Panc1 (cell line): ENCODE measurements at regions of chr4 and their contacts with region 1.

Region 1: GRCh38 chr4:175536852-175537453 is 275.1 kb downstream of the GPM6A start:
- DNase-seq: peak; percentile 62
- ATAC-seq: no peak
- H3K4me3 ChIP-seq: no peak overlapping the region
- H3K27ac ChIP-seq: no peak overlapping the region
- H3K4me1 ChIP-seq: no peaks in the 10 kb centered on the region
- H3K27me3 ChIP-seq: no peaks in the 10 kb centered on the region
- CTCF ChIP-seq: peak; percentile 23; the same call in 1 of the 2 replicates

Region 2: DNA sequence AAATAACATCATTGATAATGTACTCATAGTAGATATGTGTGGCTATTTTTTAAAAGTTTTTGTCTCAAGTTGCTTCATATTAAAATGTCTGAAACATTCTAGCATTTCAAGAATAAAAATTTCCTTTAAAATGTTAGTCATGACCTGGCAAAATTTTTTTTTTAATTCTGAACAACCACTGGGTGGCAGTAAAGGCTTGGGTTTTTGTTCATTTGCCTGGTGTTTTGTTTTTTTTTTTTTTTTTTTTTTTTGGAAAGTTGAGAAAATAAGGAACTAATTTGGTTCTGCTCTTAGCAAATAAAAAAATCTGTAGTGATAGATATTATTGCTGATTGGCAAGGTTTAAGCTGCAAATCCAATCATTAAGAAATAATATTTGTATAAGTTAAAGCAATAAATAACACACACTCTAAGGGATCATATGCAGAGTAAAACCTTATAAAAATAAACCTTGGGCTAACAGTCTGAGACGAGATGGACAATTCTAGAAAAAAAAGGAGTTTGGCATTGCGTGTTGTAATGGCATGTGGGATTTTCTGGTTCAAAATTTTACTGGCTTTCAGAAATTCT is 1171.8 kb before region 1 on chr4:
- CTCF ChIA-PET with region 1: no interaction called
- POLR2A ChIA-PET with region 1: no interaction called
- in situ Hi-C with region 1: no loop called
- intact Hi-C with region 1: loop called (anchors 5 kb)
- DNase-seq: no peak
- ATAC-seq: no peak
- H3K4me3 ChIP-seq: no peak overlapping the region
- H3K27ac ChIP-seq: no peak overlapping the region
- H3K4me1 ChIP-seq: no peaks in the 10 kb centered on the region
- H3K27me3 ChIP-seq: no peaks in the 10 kb centered on the region
- CTCF ChIP-seq: peak; percentile 34; the same call in 1 of the 2 replicates

Region 3: GRCh38 chr4:174764105-174764729 is 772.7 kb before region 1 on chr4:
- CTCF ChIA-PET with region 1: no interaction called
- POLR2A ChIA-PET with region 1: no interaction called
- in situ Hi-C with region 1: no loop called
- intact Hi-C with region 1: loop called (anchors 2 kb)
- DNase-seq: peak; percentile 18
- ATAC-seq: no peak
- H3K4me3 ChIP-seq: no peak overlapping the region
- H3K27ac ChIP-seq: no peak overlapping the region
- H3K4me1 ChIP-seq: no peaks in the 10 kb centered on the region
- H3K27me3 ChIP-seq: no peaks in the 10 kb centered on the region
- CTCF ChIP-seq: peak; percentile 63; the same call in 1 of the 2 replicates

Region 4: DNA sequence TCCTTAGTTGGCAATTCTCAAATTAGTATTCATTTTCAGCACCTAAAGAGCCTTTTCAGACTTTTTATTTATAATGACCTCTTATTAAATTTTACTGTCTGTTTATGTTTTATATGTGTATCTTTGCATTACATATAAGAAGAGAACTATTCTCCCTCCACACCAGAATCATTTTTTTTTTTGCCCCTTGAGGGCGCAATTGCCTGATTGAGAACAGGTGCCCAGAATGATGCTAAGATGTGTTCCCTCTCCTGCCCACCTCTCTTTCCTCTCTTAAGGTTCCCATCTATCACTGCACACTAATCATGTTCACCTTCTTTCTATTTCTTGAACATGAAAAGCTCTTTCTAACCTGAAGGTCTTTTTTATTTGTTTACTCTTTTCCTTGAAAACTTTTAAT is 663.0 kb before region 1 on chr4:
- CTCF ChIA-PET with region 1: no interaction called
- POLR2A ChIA-PET with region 1: no interaction called
- in situ Hi-C with region 1: no loop called
- intact Hi-C with region 1: loop called (anchors 5 kb)
- DNase-seq: peak; percentile 17
- ATAC-seq: no peak
- H3K4me3 ChIP-seq: no peak overlapping the region
- H3K27ac ChIP-seq: no peak overlapping the region
- H3K4me1 ChIP-seq: no peaks in the 10 kb centered on the region
- H3K27me3 ChIP-seq: no peaks in the 10 kb centered on the region
- CTCF ChIP-seq: peak; percentile 23; the same call in 1 of the 2 replicates